Activated CD8-positive, alpha-beta T cell treated with anti-CD3 and anti-CD28 coated beads for 36 hours (primary cell): ENCODE measurements at regions of chr2 and their contacts with region 1.

Region 1: GRCh38 chr2:85538486-85539360 is at the start of gene MAT2A:
- DNase-seq: peak; percentile 91
- ATAC-seq: peak; percentile 86
- H3K4me3 Mint-ChIP-seq: peak within 1 kb of the TSS; percentile 99
- H3K27ac Mint-ChIP-seq: peak within 1 kb of the TSS; percentile 99
- H3K4me1 Mint-ChIP-seq: peaks cover 41% of the 10 kb centered on the region
- H3K27me3 Mint-ChIP-seq: no peaks in the 10 kb centered on the region
- CTCF ChIP-seq: peak; percentile 65
- total RNA-seq, gene MAT2A: 276 to 282 TPM

Region 2: DNA sequence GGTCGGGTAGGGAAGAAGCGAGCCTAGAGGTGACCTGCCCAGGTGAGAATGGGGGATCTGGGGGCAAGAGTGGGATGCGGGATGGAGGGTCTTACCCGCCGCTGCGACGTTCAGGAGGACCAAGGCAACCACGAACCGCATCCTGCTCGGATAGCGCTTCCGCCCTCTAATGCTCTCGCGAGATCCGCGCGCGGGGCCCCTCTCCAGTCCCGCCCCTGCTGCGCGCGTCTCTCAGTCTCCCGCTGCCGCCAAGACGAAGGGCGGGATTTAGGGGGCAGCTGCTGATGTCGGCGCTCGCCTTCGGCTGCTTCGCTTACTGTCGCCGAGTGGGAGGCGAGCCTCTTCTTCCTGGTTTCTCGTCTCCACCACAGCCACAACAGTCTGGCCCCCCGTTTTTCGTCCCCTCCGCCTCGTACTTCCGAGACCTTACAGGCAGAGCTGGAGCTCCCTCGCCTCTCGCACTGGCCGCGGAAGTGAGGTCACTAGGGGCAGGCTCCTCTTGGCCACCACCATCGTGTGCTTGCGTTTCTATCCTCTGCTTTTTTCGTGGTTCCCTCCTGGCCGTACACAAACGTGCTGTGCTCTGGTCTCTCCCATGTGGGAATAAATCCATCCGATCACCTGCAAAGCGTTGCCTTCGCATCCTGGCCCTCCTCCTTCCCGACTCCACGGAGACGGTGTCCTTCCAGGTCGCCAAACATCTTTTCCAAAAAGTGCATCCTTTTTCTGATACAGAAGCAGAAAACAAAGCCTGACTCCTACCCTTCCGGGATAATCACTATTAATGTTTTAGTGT is 210.7 kb before region 1 on chr2 and contains the start of gene TGOLN2:
- CTCF ChIA-PET with region 1: interaction called, 3 read pairs
- POLR2A ChIA-PET with region 1: interaction called, 28 read pairs
- intact Hi-C with region 1: loop called (anchors 10 kb)
- DNase-seq: peak; percentile 96
- ATAC-seq: peak; percentile 89
- H3K4me3 Mint-ChIP-seq: peak within 1 kb of the TSS; percentile 92
- H3K27ac Mint-ChIP-seq: peak within 1 kb of the TSS; percentile 100
- H3K4me1 Mint-ChIP-seq: peaks cover 31% of the 10 kb centered on the region
- H3K27me3 Mint-ChIP-seq: no peaks in the 10 kb centered on the region
- CTCF ChIP-seq: no peak
- total RNA-seq, gene TGOLN2: 62.8 to 64.0 TPM

Region 3: GRCh38 chr2:85420536-85421259 is 118.0 kb before region 1 on chr2:
- CTCF ChIA-PET with region 1: interaction called, 46 read pairs
- POLR2A ChIA-PET with region 1: interaction called, 382 read pairs
- intact Hi-C with region 1: no loop called
- DNase-seq: peak; percentile 95
- ATAC-seq: peak; percentile 74
- H3K4me3 Mint-ChIP-seq: peak overlapping the region; percentile 31
- H3K27ac Mint-ChIP-seq: peak overlapping the region; percentile 73
- H3K4me1 Mint-ChIP-seq: peaks cover 18% of the 10 kb centered on the region
- H3K27me3 Mint-ChIP-seq: no peaks in the 10 kb centered on the region
- CTCF ChIP-seq: peak; percentile 97

Region 4: DNA sequence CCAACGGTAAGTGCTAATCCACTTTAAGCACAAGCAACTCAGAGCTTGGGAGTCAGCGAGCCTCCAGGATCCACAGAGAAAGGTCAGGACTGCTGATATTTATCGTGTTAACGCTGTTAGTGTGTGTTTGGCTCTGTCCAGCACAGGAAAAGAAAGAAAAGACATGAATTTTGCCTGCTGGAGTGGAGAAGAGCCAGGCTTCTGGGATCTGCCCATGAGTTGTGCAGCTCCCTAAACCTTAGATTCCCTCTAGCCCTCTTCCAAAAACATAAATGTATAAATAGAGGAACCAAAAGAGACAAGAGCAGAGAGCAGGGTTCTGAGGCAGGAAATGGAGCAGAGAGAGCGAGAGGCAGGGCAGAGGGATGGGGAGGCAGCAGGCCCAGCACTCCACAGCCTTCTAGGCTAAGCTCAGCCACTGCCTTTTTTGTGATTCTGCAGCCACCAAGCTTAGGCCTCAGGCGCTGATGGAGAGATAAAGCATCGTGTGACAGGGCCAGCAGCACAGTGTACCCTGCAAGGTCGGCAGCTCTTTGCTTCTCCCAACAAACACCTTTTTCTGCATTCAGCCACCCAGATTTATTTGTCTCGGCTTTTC is 14.3 kb before region 1 on chr2:
- CTCF ChIA-PET with region 1: interaction called, 3 read pairs
- POLR2A ChIA-PET with region 1: interaction called, 10 read pairs
- intact Hi-C with region 1: no loop called
- DNase-seq: no peak
- ATAC-seq: no peak
- H3K4me3 Mint-ChIP-seq: no peak overlapping the region
- H3K27ac Mint-ChIP-seq: no peak overlapping the region
- H3K4me1 Mint-ChIP-seq: no peaks in the 10 kb centered on the region
- H3K27me3 Mint-ChIP-seq: peaks cover 7% of the 10 kb centered on the region
- CTCF ChIP-seq: no peak

Region 5: DNA sequence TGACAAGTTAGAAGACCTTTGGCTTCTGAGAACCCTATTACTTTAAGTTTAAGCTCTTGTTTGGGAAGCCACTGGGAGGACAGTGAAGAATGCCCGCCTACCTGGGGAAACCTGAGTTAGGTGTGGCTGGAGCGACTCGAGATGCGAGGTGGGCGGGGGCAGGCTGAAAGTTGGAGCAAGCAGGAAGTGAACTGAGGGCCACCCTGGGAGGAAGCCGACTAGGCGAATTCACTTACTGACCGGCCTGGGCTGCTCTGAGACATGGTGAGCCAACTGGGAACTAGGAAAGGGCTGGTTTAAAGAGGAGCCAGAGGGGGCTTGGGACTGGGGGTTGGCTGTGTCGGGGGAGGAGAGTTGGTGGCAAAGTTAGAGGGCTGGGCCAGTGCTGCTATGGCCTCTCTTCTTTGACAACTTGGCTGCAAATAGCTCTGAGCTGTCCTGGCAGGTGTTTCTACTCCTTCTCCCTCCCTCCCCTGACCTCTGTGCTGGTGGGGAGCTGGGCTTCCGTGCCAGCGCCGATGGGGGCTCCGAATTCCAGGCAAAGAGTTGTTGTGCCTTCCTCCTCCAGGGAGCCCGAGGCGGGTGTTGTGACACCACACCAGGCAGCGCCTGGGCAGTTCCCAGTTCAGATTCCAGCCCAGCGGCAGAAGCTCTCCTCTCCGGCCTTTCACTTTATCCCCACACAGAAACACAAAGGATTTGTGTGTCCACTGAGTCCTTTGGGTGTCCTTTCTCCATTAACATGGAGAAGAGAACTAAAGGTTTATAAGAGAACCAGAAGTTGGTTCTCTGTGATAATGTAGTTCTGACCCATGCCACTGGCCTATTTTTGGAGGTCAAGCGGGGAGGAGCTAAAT is 38.9 kb after region 1 on chr2 and contains the start of gene VAMP8:
- CTCF ChIA-PET with region 1: no interaction called
- POLR2A ChIA-PET with region 1: interaction called, 12 read pairs
- intact Hi-C with region 1: no loop called
- DNase-seq: peak; percentile 78
- ATAC-seq: peak; percentile 76
- H3K4me3 Mint-ChIP-seq: peak within 1 kb of the TSS; percentile 96
- H3K27ac Mint-ChIP-seq: peak within 1 kb of the TSS; percentile 90
- H3K4me1 Mint-ChIP-seq: peaks cover 22% of the 10 kb centered on the region
- H3K27me3 Mint-ChIP-seq: no peaks in the 10 kb centered on the region
- CTCF ChIP-seq: no peak
- total RNA-seq, gene VAMP8: 84.5 to 91.1 TPM

Region 6: GRCh38 chr2:85611705-85612587 is 73.2 kb after region 1 on chr2 and contains the start of gene C2orf68:
- CTCF ChIA-PET with region 1: no interaction called
- POLR2A ChIA-PET with region 1: interaction called, 16 read pairs
- intact Hi-C with region 1: no loop called
- DNase-seq: peak; percentile 94
- ATAC-seq: peak; percentile 74
- H3K4me3 Mint-ChIP-seq: peak within 1 kb of the TSS; percentile 98
- H3K27ac Mint-ChIP-seq: peak within 1 kb of the TSS; percentile 97
- H3K4me1 Mint-ChIP-seq: peaks cover 37% of the 10 kb centered on the region
- H3K27me3 Mint-ChIP-seq: no peaks in the 10 kb centered on the region
- CTCF ChIP-seq: no peak
- total RNA-seq, gene C2orf68: 25.4 to 29.1 TPM